RWPE1 (cell line): ENCODE measurements at regions of chr20 and their contacts with region 1.

Region 1: DNA sequence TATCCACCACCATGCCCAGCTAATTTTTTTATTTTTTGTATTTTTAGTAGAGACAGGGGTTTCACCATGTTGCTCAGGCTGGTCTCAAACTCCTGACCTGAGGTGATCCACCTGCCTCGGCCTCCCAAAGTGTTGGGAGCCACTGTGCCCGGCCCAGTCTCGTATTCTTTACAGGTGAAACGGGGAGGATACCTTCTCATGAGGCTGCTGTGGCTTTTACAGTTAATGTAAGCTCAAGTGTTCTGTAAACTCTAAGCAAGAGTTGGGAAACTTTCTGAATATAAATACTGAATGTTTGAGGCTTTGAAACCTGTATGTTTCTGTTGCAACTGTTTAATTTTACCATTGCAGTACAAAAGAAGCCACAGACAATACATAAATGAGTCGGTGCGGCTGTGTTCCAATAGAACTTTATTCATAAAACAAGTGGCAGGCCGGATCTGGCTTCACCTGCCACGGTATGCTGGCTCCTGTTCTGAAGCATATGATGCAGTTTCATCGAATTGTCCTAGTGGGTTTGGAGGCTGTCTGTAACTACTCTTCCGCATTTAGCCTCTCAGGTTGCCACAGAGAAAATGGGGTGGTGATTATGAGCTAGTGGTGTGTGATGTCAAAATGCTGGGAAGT is 192.5 kb upstream of the ZFP64 start:
- DNase-seq: no peak
- H3K27ac ChIP-seq: no peak overlapping the region
- CTCF ChIP-seq: no peak

Region 2: DNA sequence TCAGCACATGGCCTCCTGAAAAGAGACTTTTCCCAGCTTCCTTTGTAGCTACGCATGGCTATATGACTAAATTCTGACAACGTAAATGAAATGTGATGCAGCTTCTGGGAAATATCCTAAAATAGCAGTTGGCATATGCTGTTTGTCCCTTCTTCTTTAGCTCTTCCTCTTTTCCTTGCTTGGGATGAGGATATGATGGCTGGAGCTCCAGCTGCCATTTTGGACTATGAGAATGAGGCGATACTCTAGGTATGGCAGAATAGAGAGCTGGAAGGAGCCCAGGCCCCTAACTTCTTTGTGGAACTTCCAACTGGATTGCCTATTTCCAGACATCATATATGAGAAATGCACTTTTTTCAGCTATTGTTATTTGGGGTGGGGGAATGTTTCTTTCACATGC is 187.3 kb before region 1 on chr20:
- CTCF ChIA-PET with region 1: no interaction called
- POLR2A ChIA-PET with region 1: no interaction called
- DNase-seq: no peak
- H3K27ac ChIP-seq: no peak overlapping the region
- CTCF ChIP-seq: no peak

Region 3: DNA sequence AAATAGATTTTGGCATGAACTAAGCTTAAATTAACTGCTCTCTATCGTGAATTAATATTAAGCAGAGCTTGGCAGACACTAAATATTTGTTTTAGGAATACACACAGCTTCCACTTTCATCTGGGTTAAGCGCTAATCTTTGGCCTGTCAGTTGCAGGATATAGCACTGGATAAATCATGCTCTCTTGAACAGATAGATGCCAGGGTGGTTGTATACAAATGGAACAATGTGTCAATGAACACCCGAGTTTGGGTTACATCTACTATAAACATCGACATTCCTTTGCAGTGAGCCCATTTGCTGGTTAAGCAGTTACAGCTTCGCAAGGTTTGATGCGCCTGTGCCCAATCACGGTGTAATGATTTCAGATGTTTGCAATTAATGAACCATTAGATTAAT is 145.7 kb after region 1 on chr20:
- CTCF ChIA-PET with region 1: no interaction called
- POLR2A ChIA-PET with region 1: no interaction called
- DNase-seq: no peak
- H3K27ac ChIP-seq: no peak overlapping the region
- CTCF ChIP-seq: no peak

Region 4: GRCh38 chr20:52708137-52708536 is 324.0 kb after region 1 on chr20:
- CTCF ChIA-PET with region 1: interaction called, 11 read pairs
- POLR2A ChIA-PET with region 1: no interaction called
- DNase-seq: no peak
- H3K27ac ChIP-seq: no peak overlapping the region
- CTCF ChIP-seq: no peak